Stomach (tissue), 19 donors: ENCODE measurements at regions of chr17 and their contacts with region 1.

Region 1: DNA sequence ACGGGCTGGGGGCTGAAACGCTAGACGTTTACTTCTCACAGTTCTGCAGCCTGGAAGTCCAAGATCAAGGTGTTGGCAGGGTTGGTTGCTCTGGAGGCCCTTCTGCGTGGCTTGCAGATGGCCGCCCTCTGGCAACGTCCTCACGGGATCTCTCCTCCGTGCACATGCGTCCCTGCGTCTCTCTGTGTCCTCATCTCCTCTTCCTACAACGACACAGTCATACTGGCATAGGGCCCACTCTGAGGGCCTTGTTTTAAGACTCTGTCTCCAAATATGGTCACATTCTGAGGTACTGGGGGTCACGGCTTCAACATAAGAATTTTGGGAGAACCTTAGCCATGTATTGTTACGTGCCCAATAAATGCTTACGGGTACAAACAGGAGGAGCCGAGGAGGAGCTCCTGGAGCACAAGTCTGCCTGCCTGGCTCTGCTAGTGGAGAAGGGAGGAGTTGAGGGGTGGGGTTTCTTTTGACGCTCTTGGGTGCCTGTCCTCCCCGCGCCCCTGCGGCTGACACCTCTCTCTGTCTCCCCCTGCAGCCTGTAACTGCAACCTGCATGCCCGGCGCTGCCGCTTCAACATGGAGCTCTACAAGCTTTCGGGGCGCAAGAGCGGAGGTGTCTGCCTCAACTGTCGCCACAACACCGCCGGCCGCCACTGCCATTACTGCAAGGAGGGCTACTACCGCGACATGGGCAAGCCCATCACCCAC is 141.1 kb downstream of the NTN1 start:
- DNase-seq: peak in 1 of 2 donors; percentile 65
- H3K4me3 ChIP-seq: no peak overlapping the region
- H3K27ac ChIP-seq: peak overlapping the region in 4 of 5 donors; percentile 68 to 76 (median 73)
- H3K4me1 ChIP-seq: peaks cover 9 to 41% (median 13%) of the 10 kb centered on the region in 4 donors
- H3K27me3 ChIP-seq: no peaks in the 10 kb centered on the region
- CTCF ChIP-seq: no peak
- EP300 ChIP-seq: no peak
- POLR2A ChIP-seq: no peak

Region 2: GRCh38 chr17:9115446-9116191 is 46.8 kb before region 1 on chr17:
- intact Hi-C with region 1: no loop called
- DNase-seq: peak; percentile 27 to 79
- H3K4me3 ChIP-seq: peak overlapping the region; percentile 23 to 32 (median 30)
- H3K27ac ChIP-seq: peak overlapping the region; percentile 65 to 86 (median 77)
- H3K4me1 ChIP-seq: peaks cover 0 to 29% (median 12%) of the 10 kb centered on the region in 4 donors
- H3K27me3 ChIP-seq: peaks cover 0 to 20% (median 4%) of the 10 kb centered on the region in 3 donors
- CTCF ChIP-seq: peak in 2 of 7 experiments; percentile 14 to 18
- EP300 ChIP-seq: no peak
- POLR2A ChIP-seq: no peak

Region 3: DNA sequence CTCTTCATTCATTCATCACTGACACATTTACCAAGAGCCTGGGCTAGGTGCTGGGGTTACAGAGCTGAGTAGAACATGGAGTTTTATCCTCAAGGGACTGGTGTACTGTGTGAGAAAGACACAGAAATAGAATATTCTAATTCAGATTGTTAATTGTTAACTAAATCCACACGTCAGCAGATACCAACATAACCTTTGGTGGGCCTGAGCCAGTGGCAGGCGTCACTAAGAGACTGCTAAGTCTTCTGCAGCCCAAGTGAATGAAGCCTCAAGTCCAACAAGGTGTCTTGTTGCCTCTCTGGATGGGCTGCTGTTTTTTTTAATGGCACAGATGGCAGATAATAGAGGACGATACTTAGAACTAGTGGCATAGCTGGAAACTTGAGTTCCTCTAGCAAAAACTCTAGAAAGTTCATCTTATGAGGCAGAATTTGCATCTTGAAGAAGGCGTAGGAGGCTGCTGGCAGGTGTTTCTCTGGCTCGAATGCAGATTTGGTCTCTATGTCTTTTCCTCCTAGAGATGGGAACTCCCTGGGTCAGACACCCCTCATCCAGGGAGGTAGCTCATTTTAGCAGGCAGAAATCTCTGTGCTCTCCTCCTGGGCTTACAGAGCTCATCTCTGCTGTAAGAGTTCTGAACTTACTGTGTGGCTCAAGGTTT is 38.4 kb after region 1 on chr17:
- intact Hi-C with region 1: no loop called
- DNase-seq: no peak
- H3K4me3 ChIP-seq: no peak overlapping the region
- H3K27ac ChIP-seq: no peak overlapping the region
- H3K4me1 ChIP-seq: peaks cover 0 to 8% (median 1%) of the 10 kb centered on the region in 4 donors
- H3K27me3 ChIP-seq: no peaks in the 10 kb centered on the region
- CTCF ChIP-seq: no peak
- EP300 ChIP-seq: no peak
- POLR2A ChIP-seq: no peak

Region 4: GRCh38 chr17:9291912-9292560 is 129.6 kb after region 1 on chr17:
- intact Hi-C with region 1: loop called (anchors 5 kb)
- DNase-seq: peak; percentile 42 to 80
- H3K4me3 ChIP-seq: no peak overlapping the region
- H3K27ac ChIP-seq: peak overlapping the region in 4 of 5 donors; percentile 46 to 80 (median 71)
- H3K4me1 ChIP-seq: peaks cover 3 to 24% (median 15%) of the 10 kb centered on the region in 4 donors
- H3K27me3 ChIP-seq: no peaks in the 10 kb centered on the region
- CTCF ChIP-seq: peak in 5 of 7 experiments; percentile 40 to 73 (median 65)
- EP300 ChIP-seq: no peak
- POLR2A ChIP-seq: no peak